Gastrocnemius medialis (tissue), 4 donors: ENCODE measurements at regions of chr5 and their contacts with region 1.

Region 1: GRCh38 chr5:112707187-112708102 is 30.2 kb upstream of the APC start:
- DNase-seq: peak; percentile 98 to 99
- ATAC-seq: peak; percentile 97 to 99
- H3K4me3 ChIP-seq: peak overlapping the region; percentile 80 to 99 (median 89)
- H3K27ac ChIP-seq: peak overlapping the region; percentile 91 to 97 (median 94)
- H3K4me1 ChIP-seq: peaks cover 40 to 41% of the 10 kb centered on the region in 2 donors
- H3K27me3 ChIP-seq: no peaks in the 10 kb centered on the region
- CTCF ChIP-seq: peak in 3 of 5 experiments; percentile 11 to 18 (median 13)
- POLR2A ChIP-seq: peak; percentile 54 to 64

Region 2: GRCh38 chr5:111757355-111758283 is 949.8 kb before region 1 on chr5:
- in situ Hi-C with region 1: no loop called
- intact Hi-C with region 1: loop called (anchors 10 kb)
- DNase-seq: peak; percentile 90 to 95
- ATAC-seq: peak; percentile 72 to 76
- H3K4me3 ChIP-seq: peak overlapping the region; percentile 49 to 75 (median 64)
- H3K27ac ChIP-seq: peak overlapping the region; percentile 74 to 94 (median 90)
- H3K4me1 ChIP-seq: peaks cover 37 to 43% of the 10 kb centered on the region in 2 donors
- H3K27me3 ChIP-seq: no peaks in the 10 kb centered on the region
- CTCF ChIP-seq: peak; percentile 16 to 39 (median 30)
- POLR2A ChIP-seq: peak; percentile 56 to 82

Region 3: GRCh38 chr5:112737463-112738190 is 30.2 kb after region 1 on chr5 and contains the start of gene APC:
- in situ Hi-C with region 1: no loop called
- intact Hi-C with region 1: loop called (anchors 2 kb)
- DNase-seq: peak; percentile 82 to 93
- ATAC-seq: peak; percentile 94 to 98
- H3K4me3 ChIP-seq: peak within 1 kb of the TSS; percentile 68 to 85 (median 72)
- H3K27ac ChIP-seq: peak within 1 kb of the TSS; percentile 59 to 78 (median 73)
- H3K4me1 ChIP-seq: peaks cover 24 to 27% of the 10 kb centered on the region in 2 donors
- H3K27me3 ChIP-seq: no peaks in the 10 kb centered on the region
- CTCF ChIP-seq: peak in 2 of 5 experiments; percentile 9 to 10
- POLR2A ChIP-seq: peak in 1 of 2 donors; percentile 37
- total RNA-seq, gene APC: 50.1 to 102 (median 60.4) TPM

Region 4: DNA sequence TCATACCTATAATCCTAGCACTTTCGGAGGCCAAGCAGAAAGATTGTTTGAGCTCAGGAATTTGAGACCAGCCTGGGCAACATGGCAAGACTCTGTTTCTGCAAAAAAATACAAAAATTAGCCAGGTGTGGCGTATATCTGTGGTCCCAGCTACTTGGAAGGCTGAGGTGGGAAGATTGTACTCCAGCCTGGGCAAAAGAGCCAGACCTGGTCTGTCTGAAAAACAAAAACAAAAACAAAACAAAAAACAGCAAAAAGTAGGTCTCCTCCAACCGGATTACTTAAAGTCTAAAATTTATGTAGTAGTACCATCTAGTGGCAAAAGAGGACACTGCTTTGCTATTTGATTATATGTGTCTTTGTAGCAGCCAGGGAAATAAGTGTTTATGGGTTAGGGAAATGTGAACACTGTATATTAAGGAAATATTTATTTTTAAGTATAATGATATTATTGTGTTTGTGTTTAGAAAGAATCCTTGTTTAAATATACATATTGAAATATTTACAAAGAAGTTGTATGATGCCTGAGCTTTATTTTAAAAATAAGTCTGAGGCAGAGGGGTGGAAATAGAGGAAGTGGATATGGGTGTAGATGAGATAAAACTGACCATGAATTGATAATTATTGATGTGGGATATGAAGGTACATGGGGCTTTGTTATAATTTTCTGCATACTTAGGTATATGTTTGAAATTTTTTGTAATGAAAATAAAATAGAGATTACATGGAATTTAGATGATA is 50.2 kb after region 1 on chr5:
- in situ Hi-C with region 1: no loop called
- intact Hi-C with region 1: loop called (anchors 5 kb)
- DNase-seq: no peak
- ATAC-seq: peak; percentile 80 to 90
- H3K4me3 ChIP-seq: peak overlapping the region in 2 of 4 donors; percentile 8 to 22
- H3K27ac ChIP-seq: peak overlapping the region in 3 of 4 donors; percentile 16 to 39 (median 34)
- H3K4me1 ChIP-seq: peaks cover 0 to 5% of the 10 kb centered on the region in 2 donors
- H3K27me3 ChIP-seq: no peaks in the 10 kb centered on the region
- CTCF ChIP-seq: peak; percentile 64 to 92 (median 80)
- POLR2A ChIP-seq: no peak

Region 5: GRCh38 chr5:112860929-112861637 is 153.6 kb after region 1 on chr5 and contains the start of gene SRP19:
- in situ Hi-C with region 1: no loop called
- intact Hi-C with region 1: loop called (anchors 5 kb)
- DNase-seq: peak; percentile 92 to 94
- ATAC-seq: peak; percentile 99
- H3K4me3 ChIP-seq: peak within 1 kb of the TSS; percentile 71 to 99 (median 89)
- H3K27ac ChIP-seq: peak within 1 kb of the TSS; percentile 84 to 90 (median 86)
- H3K4me1 ChIP-seq: peaks cover 20 to 25% of the 10 kb centered on the region in 2 donors
- H3K27me3 ChIP-seq: no peaks in the 10 kb centered on the region
- CTCF ChIP-seq: no peak
- POLR2A ChIP-seq: peak; percentile 69 to 81
- total RNA-seq, gene SRP19: 40.4 to 63.8 (median 55.0) TPM

Region 6: GRCh38 chr5:112921833-112922817 is 214.7 kb after region 1 on chr5 and contains the start of gene REEP5:
- in situ Hi-C with region 1: no loop called
- intact Hi-C with region 1: loop called (anchors 2 kb)
- DNase-seq: peak; percentile 66 to 80
- ATAC-seq: peak; percentile 80 to 83
- H3K4me3 ChIP-seq: peak within 1 kb of the TSS; percentile 65 to 100 (median 88)
- H3K27ac ChIP-seq: peak within 1 kb of the TSS; percentile 93 to 100 (median 98)
- H3K4me1 ChIP-seq: peaks cover 36 to 42% of the 10 kb centered on the region in 2 donors
- H3K27me3 ChIP-seq: no peaks in the 10 kb centered on the region
- CTCF ChIP-seq: peak; percentile 74 to 96 (median 90)
- POLR2A ChIP-seq: peak; percentile 84 to 89
- total RNA-seq, gene REEP5: 67.2 to 116 (median 89.9) TPM

Region 7: GRCh38 chr5:112976432-112977309 is 269.2 kb after region 1 on chr5 and contains the start of gene DCP2:
- in situ Hi-C with region 1: no loop called
- intact Hi-C with region 1: loop called (anchors 2 kb)
- DNase-seq: peak; percentile 92 to 95
- ATAC-seq: peak; percentile 100
- H3K4me3 ChIP-seq: peak within 1 kb of the TSS; percentile 69 to 97 (median 92)
- H3K27ac ChIP-seq: peak within 1 kb of the TSS; percentile 84 to 92 (median 90)
- H3K4me1 ChIP-seq: peaks cover 33 to 34% of the 10 kb centered on the region in 2 donors
- H3K27me3 ChIP-seq: no peaks in the 10 kb centered on the region
- CTCF ChIP-seq: peak in 1 of 5 experiments; percentile 1
- POLR2A ChIP-seq: peak; percentile 72 to 82
- total RNA-seq, gene DCP2: 9.8 to 30.9 (median 27.2) TPM